Right ventricle myocardium inferior (tissue), 1 donor: ENCODE measurements at regions of chr15 and their contacts with region 1.

Region 1: DNA sequence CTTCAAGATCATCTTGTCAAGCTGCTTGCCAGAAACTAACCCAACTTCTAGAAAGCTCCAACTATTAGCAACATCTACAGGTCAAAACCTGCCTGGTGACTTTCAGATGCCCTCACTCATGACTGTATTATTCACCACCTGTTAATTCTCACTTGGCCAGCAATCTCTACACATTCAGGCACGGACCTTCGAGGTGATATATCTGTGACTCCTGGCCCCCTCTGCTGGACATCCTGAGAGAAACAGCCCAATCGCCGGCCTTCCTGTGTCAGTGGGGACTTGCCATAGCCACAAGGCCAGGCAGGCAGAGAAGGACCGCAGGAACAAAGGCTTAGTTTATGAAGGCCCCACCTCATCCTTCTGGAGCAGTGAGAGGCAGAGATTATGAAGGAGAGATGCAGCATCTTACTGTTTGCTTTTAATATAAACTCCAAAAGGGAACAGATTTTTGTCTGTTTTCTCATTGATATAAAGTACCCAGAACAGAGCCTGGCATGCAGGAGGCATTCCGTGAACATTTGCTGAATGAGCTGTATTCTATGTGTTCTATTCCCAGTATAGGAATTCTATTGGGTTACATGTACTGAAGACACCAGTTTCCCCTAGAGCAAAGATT is 24.4 kb upstream of the OCA2 start:
- DNase-seq: no peak
- ATAC-seq: peak; percentile 62

Region 2: DNA sequence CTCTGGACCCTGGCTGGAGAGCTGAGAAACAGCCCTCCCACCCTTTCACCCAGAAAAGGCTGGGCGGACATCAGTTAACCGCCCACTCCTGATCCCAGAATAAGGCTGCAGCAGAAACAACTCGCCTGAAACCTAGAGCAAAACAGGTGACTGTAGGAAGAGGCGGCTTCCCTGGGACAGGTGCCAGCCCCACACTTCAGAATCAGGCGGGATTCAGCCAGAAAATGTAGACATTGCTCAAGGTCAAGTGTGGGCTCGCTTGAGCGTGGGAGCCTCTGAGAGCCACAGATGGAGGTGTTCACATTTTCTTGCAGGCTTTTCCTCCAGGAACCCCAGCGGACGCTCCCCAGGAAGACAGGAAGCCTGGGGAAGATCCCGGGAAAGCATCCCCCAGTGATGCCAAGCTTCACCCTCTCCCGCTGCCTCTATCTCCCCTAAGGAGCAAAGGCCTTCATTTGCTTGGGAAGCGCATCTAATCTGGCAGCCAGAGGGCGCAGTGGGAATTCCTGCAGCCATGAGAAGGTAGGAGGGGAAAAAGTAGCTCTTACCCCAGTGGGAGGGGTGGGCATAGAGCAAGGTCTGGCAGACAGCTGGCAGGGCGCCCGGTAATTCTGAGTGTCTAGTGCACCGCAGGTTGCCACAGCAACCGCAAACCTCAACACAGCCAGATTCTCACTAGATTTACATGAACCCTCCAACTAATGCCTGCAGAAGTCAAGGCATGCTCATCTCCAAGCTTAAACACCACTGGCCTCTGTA is 102.1 kb before region 1 on chr15:
- intact Hi-C with region 1: loop called (anchors 1 kb)
- DNase-seq: no peak
- ATAC-seq: peak; percentile 33

Region 3: DNA sequence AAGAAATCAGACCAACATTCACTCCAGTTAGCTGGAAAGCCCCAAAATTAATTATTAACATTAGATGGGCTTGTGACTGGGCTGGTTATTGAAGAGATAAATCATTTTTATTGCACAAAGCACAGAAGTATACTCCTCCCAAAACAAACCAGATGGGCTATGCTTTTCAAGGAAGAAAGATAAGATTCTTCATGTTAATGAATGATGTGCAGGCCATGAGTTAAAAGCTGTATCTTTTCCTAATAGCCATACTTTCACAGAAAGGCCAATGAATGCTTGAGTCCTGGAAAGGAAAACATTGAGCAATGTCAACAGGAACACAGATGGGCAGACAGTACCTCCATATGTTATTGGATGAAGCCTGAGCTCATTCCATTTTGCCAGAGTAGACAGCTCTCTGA is 79.8 kb before region 1 on chr15:
- intact Hi-C with region 1: no loop called
- DNase-seq: no peak
- ATAC-seq: no peak

Region 4: GRCh38 chr15:28086175-28086703 is 37.3 kb before region 1 on chr15:
- intact Hi-C with region 1: loop called (anchors 5 kb)
- DNase-seq: no peak
- ATAC-seq: peak; percentile 96

Region 5: GRCh38 chr15:28185153-28185895 is 61.8 kb after region 1 on chr15:
- intact Hi-C with region 1: loop called (anchors 5 kb)
- DNase-seq: peak; percentile 75
- ATAC-seq: peak; percentile 97

Region 6: GRCh38 chr15:28219116-28219515 is 95.6 kb after region 1 on chr15:
- intact Hi-C with region 1: no loop called
- DNase-seq: peak; percentile 58
- ATAC-seq: no peak